HEK293T (cell line): ENCODE measurements at regions of chr17 and their contacts with region 1.

Region 1: DNA sequence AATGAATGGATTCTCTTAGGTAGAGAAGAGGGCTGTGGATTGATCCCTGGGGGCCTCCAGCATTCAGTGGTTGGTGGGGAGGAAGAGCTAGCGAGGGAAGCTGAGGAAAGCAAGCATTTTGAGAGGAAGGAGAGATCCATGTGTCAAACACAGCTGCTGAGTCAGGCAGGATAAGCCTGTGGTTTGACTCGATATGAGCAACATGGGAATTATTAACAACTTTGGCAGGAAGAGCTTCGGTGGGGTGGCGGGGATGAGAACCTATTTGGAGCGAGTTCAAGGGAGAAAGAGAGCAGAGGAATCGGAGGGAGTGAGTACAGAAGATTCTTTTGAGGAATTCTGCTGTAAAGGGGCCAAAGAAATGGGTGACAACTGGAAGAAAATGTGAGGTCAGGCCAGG is 59.5 kb upstream of the CDC42EP4 start:
- DNase-seq: no peak

Region 2: GRCh38 chr17:73255671-73256181 is 115.6 kb before region 1 on chr17:
- CTCF ChIA-PET with region 1: interaction called, 55 read pairs
- POLR2A ChIA-PET with region 1: interaction called, 5 read pairs
- DNase-seq: peak; percentile 78

Region 3: DNA sequence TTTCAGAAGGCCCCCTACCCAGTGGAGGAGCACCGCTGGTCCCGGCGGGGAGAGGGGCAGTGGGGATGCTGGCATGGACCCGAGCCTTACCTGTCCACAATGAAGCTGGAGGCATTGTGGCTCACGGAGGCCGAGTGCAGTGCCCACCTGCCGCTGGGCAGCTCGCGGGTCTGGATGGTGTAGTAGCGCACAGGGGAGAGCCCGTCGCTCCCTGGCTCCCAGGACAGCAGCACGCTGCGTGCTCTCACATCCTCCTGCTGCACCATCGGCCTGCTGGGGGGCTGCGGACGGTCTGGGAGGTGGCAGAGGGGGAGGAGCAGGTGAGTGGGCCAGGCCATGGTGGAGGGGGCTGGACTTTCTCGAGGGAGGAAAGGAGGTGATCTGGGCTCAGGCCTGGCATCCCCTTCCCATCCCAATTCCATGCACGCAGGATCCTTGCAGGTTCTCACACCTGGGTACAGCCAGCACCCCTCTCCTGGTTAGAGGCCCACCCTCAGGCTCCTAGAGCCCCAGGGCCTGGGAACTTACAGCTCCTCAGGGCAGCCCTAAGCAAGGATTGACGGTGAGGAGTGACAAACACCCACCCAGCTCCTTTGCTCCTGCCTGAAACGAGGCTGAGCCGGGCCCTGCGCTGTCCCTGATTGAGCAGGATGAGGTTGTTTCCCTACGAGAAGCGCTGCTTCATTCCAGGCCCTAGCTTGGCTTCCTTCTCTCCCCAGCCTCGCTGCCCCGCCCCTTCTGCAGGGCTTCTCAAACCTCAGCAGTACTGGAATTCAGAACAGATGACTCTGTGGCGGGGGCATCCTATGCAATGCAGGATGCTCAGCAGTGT is 16.7 kb after region 1 on chr17:
- CTCF ChIA-PET with region 1: no interaction called
- POLR2A ChIA-PET with region 1: no interaction called
- DNase-seq: no peak

Region 4: DNA sequence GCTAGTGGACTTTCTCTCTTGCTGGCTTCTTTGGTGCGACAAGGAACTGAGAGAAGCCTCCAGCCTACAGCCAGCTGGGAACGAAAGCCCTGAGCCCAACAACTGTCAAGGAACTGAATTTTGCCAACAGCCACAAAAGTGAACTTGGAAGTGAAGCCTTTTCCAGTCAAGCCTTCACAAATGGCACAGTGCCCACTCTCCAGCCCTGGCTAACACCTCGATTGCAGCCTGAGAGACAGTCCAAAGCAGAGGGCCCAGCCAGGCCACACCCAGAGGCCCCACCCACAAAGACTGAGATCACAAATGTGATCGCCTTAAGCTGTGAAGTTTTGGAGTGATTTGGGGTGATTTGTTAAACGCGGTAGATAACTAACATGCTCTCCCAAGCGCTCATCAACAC is 517.6 kb after region 1 on chr17:
- CTCF ChIA-PET with region 1: no interaction called
- POLR2A ChIA-PET with region 1: no interaction called
- DNase-seq: no peak